ENCODE measurements at regions of chr17 and their contacts with region 1.

Region 1: GRCh38 chr17:60926466-60927157 is 249.0 kb downstream of the BCAS3 start:
- DNase-seq: no peak
- ATAC-seq: no peak
- H3K4me3 Mint-ChIP-seq: no peak overlapping the region
- H3K27ac Mint-ChIP-seq: no peak overlapping the region
- H3K4me1 Mint-ChIP-seq: no peaks in the 10 kb centered on the region
- H3K27me3 Mint-ChIP-seq: no peaks in the 10 kb centered on the region

Region 2: DNA sequence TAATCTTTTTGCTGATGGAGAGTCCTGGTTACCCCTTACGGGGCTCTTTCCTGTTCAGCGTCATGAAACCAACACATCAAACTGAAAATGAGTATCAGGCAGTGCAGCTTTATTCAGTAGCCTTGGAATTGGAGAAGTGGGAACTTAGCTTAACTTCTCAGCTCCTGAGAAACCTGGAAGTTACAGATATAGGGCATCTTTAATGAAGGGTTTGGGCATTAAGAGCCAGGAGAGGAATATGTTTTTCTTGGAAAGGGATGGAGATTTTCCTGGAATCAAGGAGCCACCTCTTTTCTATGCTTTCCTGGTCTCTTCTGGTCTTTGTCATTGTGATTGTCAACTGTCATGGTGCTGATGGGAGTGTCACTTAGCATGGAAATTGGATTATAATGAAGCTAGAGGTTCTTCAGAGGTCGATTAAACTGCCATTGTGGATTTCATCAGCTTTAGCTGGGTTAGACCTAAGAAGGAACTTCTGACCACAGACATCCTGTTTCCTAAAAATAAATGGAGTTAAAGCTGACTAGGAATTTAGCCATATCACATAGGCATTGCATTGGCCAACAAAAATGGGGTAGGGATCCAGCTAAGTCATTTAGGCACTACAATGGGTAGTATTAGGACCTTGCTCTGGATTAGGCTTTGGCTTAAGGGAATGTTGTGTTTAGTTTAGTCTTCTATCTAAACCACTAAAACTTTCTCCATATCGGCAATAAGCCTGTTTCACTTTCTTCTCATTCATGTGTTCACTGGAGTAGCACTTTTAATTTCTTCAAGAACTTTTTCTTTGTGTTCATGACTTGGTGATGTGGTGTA is 62.5 kb before region 1 on chr17:
- CTCF ChIA-PET with region 1: no interaction called
- POLR2A ChIA-PET with region 1: no interaction called
- intact Hi-C with region 1: loop called in 1 of 2 experiments (anchors 10 kb)
- DNase-seq: peak; percentile 13
- ATAC-seq: peak; percentile 77
- H3K4me3 Mint-ChIP-seq: peak overlapping the region; percentile 19
- H3K27ac Mint-ChIP-seq: peak overlapping the region; percentile 5
- H3K4me1 Mint-ChIP-seq: peaks cover 31% of the 10 kb centered on the region
- H3K27me3 Mint-ChIP-seq: no peaks in the 10 kb centered on the region

Measured in activated CD4-positive, alpha-beta T cell treated with anti-CD3 and anti-CD28 coated beads for 36 hours (primary cell).